ENCODE measurements at regions of chr4 and their contacts with region 1.

Region 1: GRCh38 chr4:55853484-55854046 is at the start of gene EXOC1:
- DNase-seq: peak; percentile 95 to 97 (median 95)
- H3K4me3 ChIP-seq: peak within 1 kb of the TSS; percentile 92 to 100 (median 99)
- H3K4me3 Mint-ChIP-seq: no peak within 1 kb of the TSS
- H3K27ac ChIP-seq: peak within 1 kb of the TSS; percentile 72 to 98
- H3K27ac Mint-ChIP-seq: peak within 1 kb of the TSS; percentile 93 to 97 (median 96)
- H3K4me1 ChIP-seq: peaks cover 8 to 15% of the 10 kb centered on the region in 2 donors
- H3K4me1 Mint-ChIP-seq: peaks cover 8% of the 10 kb centered on the region
- H3K27me3 ChIP-seq: peaks cover 0 to 2% of the 10 kb centered on the region in 2 donors
- H3K27me3 Mint-ChIP-seq: peaks cover 0 to 4% (median 2%) of the 10 kb centered on the region in 3 donors
- CTCF ChIP-seq: no peak
- polyA plus RNA-seq, gene EXOC1: 13.7 to 22.9 (median 21.2) TPM

Region 2: DNA sequence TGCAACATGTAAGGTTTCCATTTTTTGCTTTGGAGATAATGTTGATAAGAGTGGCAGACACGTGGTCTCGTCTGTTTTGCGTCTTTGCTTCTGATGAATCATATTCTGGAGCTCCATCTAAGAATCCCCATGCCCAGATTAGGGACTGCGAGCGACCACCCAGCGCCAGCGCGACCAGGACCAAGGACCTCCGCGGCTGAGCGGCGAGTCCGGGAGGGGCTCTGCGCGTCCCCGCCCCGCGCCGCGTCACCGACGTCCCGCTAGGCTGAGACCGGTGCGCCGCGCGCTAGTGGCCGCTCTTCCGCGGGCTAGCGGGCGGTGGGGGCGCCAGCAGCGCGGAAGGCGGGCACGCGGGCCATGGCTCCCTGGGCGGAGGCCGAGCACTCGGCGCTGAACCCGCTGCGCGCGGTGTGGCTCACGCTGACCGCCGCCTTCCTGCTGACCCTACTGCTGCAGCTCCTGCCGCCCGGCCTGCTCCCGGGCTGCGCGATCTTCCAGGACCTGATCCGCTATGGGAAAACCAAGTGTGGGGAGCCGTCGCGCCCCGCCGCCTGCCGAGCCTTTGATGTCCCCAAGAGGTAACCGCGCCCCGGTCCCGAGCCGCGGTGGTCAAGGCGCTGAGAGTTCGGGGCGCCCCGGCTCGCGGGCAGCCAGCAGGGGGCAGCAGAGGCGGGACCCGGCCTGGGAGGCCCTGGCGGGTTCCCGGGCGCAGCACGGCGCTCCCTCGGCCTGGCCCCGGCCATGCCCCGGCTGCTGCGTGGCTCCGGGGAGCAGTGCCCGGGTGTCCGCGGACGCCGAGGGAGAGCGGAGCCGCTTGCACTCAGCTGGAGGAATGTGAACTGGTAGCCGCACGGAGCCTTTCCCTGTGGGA is 507.4 kb before region 1 on chr4 and contains the start of gene SRD5A3:
- intact Hi-C with region 1: loop called in 1 of 2 experiments (anchors 10 kb)
- DNase-seq: peak; percentile 67 to 77 (median 75)
- H3K4me3 ChIP-seq: peak within 1 kb of the TSS; percentile 60 to 83 (median 72)
- H3K4me3 Mint-ChIP-seq: peak within 1 kb of the TSS; percentile 88 to 95
- H3K27ac ChIP-seq: peak within 1 kb of the TSS; percentile 88 to 93
- H3K27ac Mint-ChIP-seq: peak within 1 kb of the TSS; percentile 91 to 96 (median 96)
- H3K4me1 ChIP-seq: peaks cover 12 to 32% of the 10 kb centered on the region in 2 donors
- H3K4me1 Mint-ChIP-seq: peaks cover 21% of the 10 kb centered on the region
- H3K27me3 ChIP-seq: no peaks in the 10 kb centered on the region
- H3K27me3 Mint-ChIP-seq: peaks cover 0 to 1% (median 0%) of the 10 kb centered on the region in 3 donors
- CTCF ChIP-seq: peak; percentile 99
- polyA plus RNA-seq, gene SRD5A3: 5.9 to 26.2 (median 16.2) TPM

Region 3: GRCh38 chr4:55409468-55410171 is 443.9 kb before region 1 on chr4:
- intact Hi-C with region 1: loop called in 1 of 2 experiments (anchors 10 kb)
- DNase-seq: no peak
- H3K4me3 ChIP-seq: no peak overlapping the region
- H3K4me3 Mint-ChIP-seq: no peak overlapping the region
- H3K27ac ChIP-seq: peak overlapping the region in 1 of 2 donors; percentile 71
- H3K27ac Mint-ChIP-seq: peak overlapping the region; percentile 24 to 84 (median 58)
- H3K4me1 ChIP-seq: no peaks in the 10 kb centered on the region
- H3K4me1 Mint-ChIP-seq: peaks cover 16% of the 10 kb centered on the region
- H3K27me3 ChIP-seq: no peaks in the 10 kb centered on the region
- H3K27me3 Mint-ChIP-seq: no peaks in the 10 kb centered on the region
- CTCF ChIP-seq: no peak

Region 4: GRCh38 chr4:55546756-55547465 is 306.7 kb before region 1 on chr4 and contains the start of gene CLOCK:
- intact Hi-C with region 1: loop called (anchors 5 kb)
- DNase-seq: peak; percentile 67 to 77 (median 74)
- H3K4me3 ChIP-seq: peak within 1 kb of the TSS; percentile 48 to 96 (median 86)
- H3K4me3 Mint-ChIP-seq: peak within 1 kb of the TSS; percentile 87 to 91
- H3K27ac ChIP-seq: peak within 1 kb of the TSS; percentile 70 to 83
- H3K27ac Mint-ChIP-seq: peak within 1 kb of the TSS; percentile 82 to 94 (median 90)
- H3K4me1 ChIP-seq: peaks cover 14 to 18% of the 10 kb centered on the region in 2 donors
- H3K4me1 Mint-ChIP-seq: peaks cover 17% of the 10 kb centered on the region
- H3K27me3 ChIP-seq: peaks cover 3 to 9% of the 10 kb centered on the region in 2 donors
- H3K27me3 Mint-ChIP-seq: peaks cover 8 to 25% (median 20%) of the 10 kb centered on the region in 3 donors
- CTCF ChIP-seq: peak; percentile 53
- polyA plus RNA-seq, gene CLOCK: 1.9 to 3.7 (median 2.9) TPM

Region 5: DNA sequence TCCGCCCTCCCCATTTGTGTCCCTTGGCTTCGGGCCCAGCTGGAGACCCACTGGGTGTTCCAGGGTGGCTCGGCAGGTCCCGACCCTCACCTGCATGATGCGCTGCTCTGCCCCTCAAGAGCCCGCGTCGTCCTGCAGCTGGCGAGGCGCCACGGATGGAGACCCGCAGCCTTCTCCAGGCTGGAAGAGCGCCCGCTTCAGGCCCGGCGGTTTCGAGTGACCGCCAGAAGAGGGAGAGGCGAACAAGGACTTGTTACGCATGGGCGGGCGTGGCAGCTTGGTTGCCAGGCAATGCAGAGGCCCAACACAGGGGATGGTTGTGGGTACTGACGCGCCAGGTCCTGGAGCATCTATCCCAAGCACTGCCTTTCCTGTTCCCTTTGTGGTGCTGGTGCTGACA is 261.6 kb before region 1 on chr4 and contains the start of gene PDCL2:
- intact Hi-C with region 1: no loop called
- DNase-seq: no peak
- H3K4me3 ChIP-seq: no peak within 1 kb of the TSS
- H3K4me3 Mint-ChIP-seq: no peak within 1 kb of the TSS
- H3K27ac ChIP-seq: no peak within 1 kb of the TSS
- H3K27ac Mint-ChIP-seq: no peak within 1 kb of the TSS
- H3K4me1 ChIP-seq: no peaks in the 10 kb centered on the region
- H3K4me1 Mint-ChIP-seq: no peaks in the 10 kb centered on the region
- H3K27me3 ChIP-seq: peaks cover 0 to 3% of the 10 kb centered on the region in 2 donors
- H3K27me3 Mint-ChIP-seq: peaks cover 0 to 10% (median 5%) of the 10 kb centered on the region in 3 donors
- CTCF ChIP-seq: no peak
- polyA plus RNA-seq, gene PDCL2: not detected

Region 6: GRCh38 chr4:55838356-55838755 is 15.2 kb before region 1 on chr4:
- intact Hi-C with region 1: no loop called
- DNase-seq: no peak
- H3K4me3 ChIP-seq: no peak overlapping the region
- H3K4me3 Mint-ChIP-seq: no peak overlapping the region
- H3K27ac ChIP-seq: no peak overlapping the region
- H3K27ac Mint-ChIP-seq: no peak overlapping the region
- H3K4me1 ChIP-seq: no peaks in the 10 kb centered on the region
- H3K4me1 Mint-ChIP-seq: no peaks in the 10 kb centered on the region
- H3K27me3 ChIP-seq: no peaks in the 10 kb centered on the region
- H3K27me3 Mint-ChIP-seq: no peaks in the 10 kb centered on the region
- CTCF ChIP-seq: no peak

Region 7: GRCh38 chr4:55948726-55949474 is 95.3 kb after region 1 on chr4 and contains the start of gene CEP135:
- intact Hi-C with region 1: loop called (anchors 5 to 10 kb)
- DNase-seq: peak; percentile 94 to 95 (median 94)
- H3K4me3 ChIP-seq: peak within 1 kb of the TSS; percentile 73 to 83 (median 79)
- H3K4me3 Mint-ChIP-seq: peak within 1 kb of the TSS; percentile 83 to 92
- H3K27ac ChIP-seq: peak within 1 kb of the TSS; percentile 92 to 100
- H3K27ac Mint-ChIP-seq: peak within 1 kb of the TSS; percentile 98 to 100 (median 99)
- H3K4me1 ChIP-seq: peaks cover 32 to 43% of the 10 kb centered on the region in 2 donors
- H3K4me1 Mint-ChIP-seq: peaks cover 40% of the 10 kb centered on the region
- H3K27me3 ChIP-seq: no peaks in the 10 kb centered on the region
- H3K27me3 Mint-ChIP-seq: peaks cover 0 to 3% (median 0%) of the 10 kb centered on the region in 3 donors
- CTCF ChIP-seq: peak; percentile 99
- polyA plus RNA-seq, gene CEP135: 4.0 to 5.1 (median 4.6) TPM

Region 8: DNA sequence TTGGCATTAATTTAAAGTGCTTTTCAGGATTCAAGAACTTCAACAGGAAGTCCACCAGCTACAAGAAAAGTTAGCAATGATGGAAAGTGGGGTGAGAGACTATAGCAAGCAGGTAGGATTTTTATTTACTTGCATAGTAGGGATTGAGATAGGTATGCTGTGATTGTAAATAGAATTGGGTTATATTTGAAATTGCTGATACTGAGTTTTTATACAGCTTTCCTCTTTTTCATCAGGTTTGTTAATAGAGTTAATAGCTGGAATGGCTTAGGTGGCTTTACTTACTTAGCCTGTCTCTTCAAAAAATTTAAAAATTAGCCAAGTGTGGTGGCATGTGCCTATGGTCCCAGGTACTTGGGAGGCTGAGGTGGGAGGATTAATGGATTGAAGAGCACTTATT is 106.1 kb after region 1 on chr4:
- intact Hi-C with region 1: no loop called
- DNase-seq: no peak
- H3K4me3 ChIP-seq: no peak overlapping the region
- H3K4me3 Mint-ChIP-seq: no peak overlapping the region
- H3K27ac ChIP-seq: no peak overlapping the region
- H3K27ac Mint-ChIP-seq: no peak overlapping the region
- H3K4me1 ChIP-seq: no peaks in the 10 kb centered on the region
- H3K4me1 Mint-ChIP-seq: no peaks in the 10 kb centered on the region
- H3K27me3 ChIP-seq: no peaks in the 10 kb centered on the region
- H3K27me3 Mint-ChIP-seq: no peaks in the 10 kb centered on the region
- CTCF ChIP-seq: no peak

Measured in CD14-positive monocyte (primary cell).